ENCODE measurements at regions of chr15 and their contacts with region 1.

Region 1: DNA sequence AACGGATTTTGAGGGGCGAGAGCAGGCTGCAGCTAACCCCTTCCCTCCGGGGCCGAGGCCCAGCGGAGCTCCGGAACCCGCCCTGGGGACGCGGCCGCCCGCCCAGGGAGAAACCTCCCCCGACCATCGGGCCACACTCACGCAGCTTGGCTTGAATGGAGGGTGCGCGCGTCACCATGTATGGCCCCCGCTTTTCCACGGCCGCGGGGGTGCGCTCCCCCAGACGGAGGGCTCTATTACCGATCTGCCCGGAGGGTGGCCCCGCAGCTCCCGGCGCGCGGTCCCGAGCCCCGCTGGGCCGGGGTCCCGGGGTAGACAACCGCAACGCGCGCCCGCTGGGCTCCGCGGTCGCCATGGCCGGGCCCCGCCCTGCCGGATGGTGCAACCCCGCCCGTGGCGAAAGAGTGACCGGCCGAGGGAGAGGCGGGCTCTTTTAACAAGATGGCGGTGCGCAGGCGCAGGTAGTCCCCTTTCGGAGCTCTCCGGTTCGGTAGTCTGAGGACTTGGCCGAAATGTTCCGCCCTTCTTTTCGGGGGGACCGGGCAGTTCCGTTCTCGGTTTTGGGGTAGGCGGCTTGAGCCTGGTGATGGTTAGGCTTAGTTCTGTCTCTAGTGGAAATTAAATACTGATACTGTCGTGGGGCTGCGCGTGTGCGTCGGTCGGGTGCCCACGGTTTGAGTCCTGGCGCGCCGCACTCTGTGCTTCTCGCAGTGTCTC is at the start of gene FAM219B:
- DNase-seq: peak; percentile 44 to 86 (median 61)
- ATAC-seq: peak; percentile 93
- H3K4me3 ChIP-seq: peak within 1 kb of the TSS; percentile 72
- H3K4me3 Mint-ChIP-seq: peak within 1 kb of the TSS; percentile 93 to 99 (median 98)
- H3K27ac ChIP-seq: peak within 1 kb of the TSS; percentile 85
- H3K27ac Mint-ChIP-seq: peak within 1 kb of the TSS; percentile 90 to 98 (median 95)
- H3K4me1 ChIP-seq: peaks cover 17 to 20% of the 10 kb centered on the region in 2 donors
- H3K4me1 Mint-ChIP-seq: peaks cover 28 to 54% (median 42%) of the 10 kb centered on the region in 7 donors
- H3K27me3 ChIP-seq: no peaks in the 10 kb centered on the region
- H3K27me3 Mint-ChIP-seq: no peaks in the 10 kb centered on the region
- total RNA-seq, gene FAM219B: 40.5 to 111 (median 99.6) TPM

Region 2: DNA sequence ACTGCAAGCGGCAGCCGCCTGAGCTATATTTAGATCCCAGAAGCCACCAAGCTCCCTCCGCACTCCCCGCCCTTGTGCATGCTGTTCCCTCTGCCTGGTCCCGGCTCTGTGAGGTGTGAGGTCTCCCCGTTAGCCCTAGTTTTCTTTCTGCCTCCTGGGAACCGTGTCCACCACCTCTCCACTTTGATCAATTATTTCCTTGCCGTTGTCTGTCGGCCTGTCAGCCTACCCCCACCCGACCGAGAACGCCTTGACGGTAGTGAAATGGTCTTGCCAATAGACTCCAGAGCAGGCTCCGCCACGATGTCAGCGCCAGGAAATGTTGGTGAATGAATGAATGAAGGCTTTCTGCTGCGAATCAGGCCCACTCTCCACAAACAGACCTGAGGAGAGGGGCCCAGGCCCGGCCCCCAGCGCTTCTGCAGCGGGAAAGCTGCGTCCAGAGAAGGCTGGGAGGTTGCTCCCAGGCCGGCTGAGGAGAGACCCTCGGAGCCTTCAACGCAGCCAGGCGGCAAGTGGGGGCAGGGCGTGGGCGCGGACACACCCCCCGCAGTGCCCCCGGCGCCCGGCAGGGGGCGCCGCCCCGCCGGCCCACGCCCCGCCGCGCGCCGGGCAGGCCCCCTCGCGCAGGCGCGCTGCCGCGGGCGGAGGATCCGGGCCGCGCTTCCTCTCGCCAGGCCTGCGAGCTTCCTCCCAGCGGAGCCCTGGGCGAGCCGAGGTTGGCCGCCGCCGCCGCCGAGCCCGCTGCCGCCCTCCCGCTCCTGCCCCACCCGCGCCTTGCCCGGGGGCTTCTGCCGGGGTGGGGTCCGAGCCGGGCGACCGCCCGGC is 125.0 kb before region 1 on chr15 and contains the start of gene CSK:
- CTCF ChIA-PET with region 1: interaction called, 14 read pairs
- POLR2A ChIA-PET with region 1: interaction called, 7 read pairs
- intact Hi-C with region 1: loop called in 1 of 2 experiments (anchors 5 kb)
- DNase-seq: peak; percentile 68 to 90 (median 85)
- ATAC-seq: peak; percentile 80
- H3K4me3 ChIP-seq: peak within 1 kb of the TSS; percentile 91
- H3K4me3 Mint-ChIP-seq: peak within 1 kb of the TSS; percentile 87 to 99 (median 96)
- H3K27ac ChIP-seq: peak within 1 kb of the TSS; percentile 92
- H3K27ac Mint-ChIP-seq: peak within 1 kb of the TSS; percentile 90 to 100 (median 98)
- H3K4me1 ChIP-seq: peaks cover 62% of the 10 kb centered on the region in 2 donors
- H3K4me1 Mint-ChIP-seq: peaks cover 64 to 73% (median 70%) of the 10 kb centered on the region in 7 donors
- H3K27me3 ChIP-seq: no peaks in the 10 kb centered on the region
- H3K27me3 Mint-ChIP-seq: no peaks in the 10 kb centered on the region
- total RNA-seq, gene CSK: 163 to 421 (median 228) TPM

Region 3: GRCh38 chr15:74842581-74843444 is 63.8 kb before region 1 on chr15 and contains the start of gene ULK3:
- CTCF ChIA-PET with region 1: interaction called, 20 read pairs
- POLR2A ChIA-PET with region 1: interaction called, 44 read pairs
- intact Hi-C with region 1: loop called (anchors 1 kb)
- DNase-seq: peak; percentile 89 to 97 (median 93)
- ATAC-seq: peak; percentile 97
- H3K4me3 ChIP-seq: peak within 1 kb of the TSS; percentile 74
- H3K4me3 Mint-ChIP-seq: peak within 1 kb of the TSS; percentile 80 to 95 (median 90)
- H3K27ac ChIP-seq: peak within 1 kb of the TSS; percentile 79
- H3K27ac Mint-ChIP-seq: peak within 1 kb of the TSS; percentile 88 to 95 (median 94)
- H3K4me1 ChIP-seq: peaks cover 40 to 50% of the 10 kb centered on the region in 2 donors
- H3K4me1 Mint-ChIP-seq: peaks cover 26 to 62% (median 50%) of the 10 kb centered on the region in 7 donors
- H3K27me3 ChIP-seq: no peaks in the 10 kb centered on the region
- H3K27me3 Mint-ChIP-seq: no peaks in the 10 kb centered on the region
- total RNA-seq, gene ULK3: 53.2 to 106 (median 59.2) TPM

Region 4: GRCh38 chr15:74889883-74890664 is 16.5 kb before region 1 on chr15 and contains the start of gene MPI:
- CTCF ChIA-PET with region 1: interaction called, 13 read pairs
- POLR2A ChIA-PET with region 1: interaction called, 23 read pairs
- intact Hi-C with region 1: loop called (anchors 1 kb)
- DNase-seq: peak; percentile 65 to 87 (median 79)
- ATAC-seq: peak; percentile 97
- H3K4me3 ChIP-seq: peak within 1 kb of the TSS; percentile 94
- H3K4me3 Mint-ChIP-seq: peak within 1 kb of the TSS; percentile 81 to 95 (median 90)
- H3K27ac ChIP-seq: peak within 1 kb of the TSS; percentile 84
- H3K27ac Mint-ChIP-seq: peak within 1 kb of the TSS; percentile 83 to 99 (median 94)
- H3K4me1 ChIP-seq: peaks cover 33 to 36% of the 10 kb centered on the region in 2 donors
- H3K4me1 Mint-ChIP-seq: peaks cover 30 to 59% (median 49%) of the 10 kb centered on the region in 7 donors
- H3K27me3 ChIP-seq: no peaks in the 10 kb centered on the region
- H3K27me3 Mint-ChIP-seq: no peaks in the 10 kb centered on the region
- total RNA-seq, gene MPI: 34.0 to 97.8 (median 80.6) TPM

Region 5: DNA sequence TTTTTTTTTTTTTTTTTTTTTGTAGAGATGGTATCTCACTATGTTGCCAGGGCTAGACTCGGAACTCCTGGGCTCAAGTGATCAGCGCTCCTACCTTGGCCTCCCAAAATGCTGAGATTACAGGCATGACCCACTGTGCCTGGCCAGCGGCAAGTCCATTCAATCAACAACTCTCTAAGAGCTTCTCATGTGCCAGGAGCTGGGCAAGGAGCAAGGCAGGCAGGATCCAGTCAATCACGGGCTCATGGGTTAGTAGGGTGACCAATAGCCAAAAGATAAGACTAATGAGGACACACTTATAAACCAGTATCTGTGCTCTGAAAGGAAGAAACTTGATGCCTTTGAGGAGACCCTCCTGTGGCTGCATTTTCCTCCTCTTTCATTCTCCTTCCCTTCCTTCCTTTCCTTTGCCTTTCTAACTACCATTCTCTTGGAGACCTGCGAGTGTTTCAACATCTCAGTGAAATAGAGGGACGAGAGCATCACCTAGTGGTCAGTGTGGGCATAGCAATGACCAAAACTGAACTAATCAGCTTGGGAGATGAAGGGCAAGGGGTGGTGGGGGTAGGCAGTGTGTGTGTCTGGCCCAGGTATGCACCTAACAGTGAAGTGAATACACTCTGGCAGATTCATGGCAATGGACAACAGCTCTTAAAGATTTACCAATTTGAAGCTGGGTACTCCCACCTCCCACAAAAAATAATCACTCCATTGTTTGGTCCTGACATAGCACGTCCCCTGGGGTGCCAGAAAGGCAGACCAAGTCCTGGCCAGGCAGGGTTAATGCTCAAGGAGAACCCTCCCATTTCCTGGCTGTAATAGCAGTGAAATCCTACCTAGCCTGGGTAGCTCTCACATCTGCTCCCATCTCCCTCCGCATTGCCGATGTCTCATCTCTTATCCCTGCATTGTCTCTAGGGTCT is 43.7 kb after region 1 on chr15:
- CTCF ChIA-PET with region 1: interaction called, 7 read pairs
- POLR2A ChIA-PET with region 1: interaction called, 4 read pairs
- intact Hi-C with region 1: loop called (anchors 1 kb)
- DNase-seq: peak; percentile 54 to 82 (median 75)
- ATAC-seq: peak; percentile 97
- H3K4me3 ChIP-seq: no peak overlapping the region
- H3K4me3 Mint-ChIP-seq: no peak overlapping the region
- H3K27ac ChIP-seq: no peak overlapping the region
- H3K27ac Mint-ChIP-seq: peak overlapping the region in 2 of 9 donors; percentile 28 to 54
- H3K4me1 ChIP-seq: no peaks in the 10 kb centered on the region
- H3K4me1 Mint-ChIP-seq: peaks cover 4 to 17% (median 10%) of the 10 kb centered on the region in 7 donors
- H3K27me3 ChIP-seq: no peaks in the 10 kb centered on the region
- H3K27me3 Mint-ChIP-seq: peaks cover 0 to 3% (median 0%) of the 10 kb centered on the region in 5 donors

Region 6: GRCh38 chr15:75891895-75892294 is 985.3 kb after region 1 on chr15:
- CTCF ChIA-PET with region 1: no interaction called
- POLR2A ChIA-PET with region 1: no interaction called
- intact Hi-C with region 1: no loop called
- DNase-seq: no peak
- ATAC-seq: no peak
- H3K4me3 ChIP-seq: no peak overlapping the region
- H3K4me3 Mint-ChIP-seq: peak overlapping the region in 1 of 10 donors; percentile 13
- H3K27ac ChIP-seq: no peak overlapping the region
- H3K27ac Mint-ChIP-seq: peak overlapping the region in 4 of 9 donors; percentile 10 to 65 (median 46)
- H3K4me1 ChIP-seq: no peaks in the 10 kb centered on the region
- H3K4me1 Mint-ChIP-seq: peaks cover 0 to 21% (median 4%) of the 10 kb centered on the region in 7 donors
- H3K27me3 ChIP-seq: no peaks in the 10 kb centered on the region
- H3K27me3 Mint-ChIP-seq: no peaks in the 10 kb centered on the region